ENCODE measurements at regions of chr6 and their contacts with region 1.

Region 1: DNA sequence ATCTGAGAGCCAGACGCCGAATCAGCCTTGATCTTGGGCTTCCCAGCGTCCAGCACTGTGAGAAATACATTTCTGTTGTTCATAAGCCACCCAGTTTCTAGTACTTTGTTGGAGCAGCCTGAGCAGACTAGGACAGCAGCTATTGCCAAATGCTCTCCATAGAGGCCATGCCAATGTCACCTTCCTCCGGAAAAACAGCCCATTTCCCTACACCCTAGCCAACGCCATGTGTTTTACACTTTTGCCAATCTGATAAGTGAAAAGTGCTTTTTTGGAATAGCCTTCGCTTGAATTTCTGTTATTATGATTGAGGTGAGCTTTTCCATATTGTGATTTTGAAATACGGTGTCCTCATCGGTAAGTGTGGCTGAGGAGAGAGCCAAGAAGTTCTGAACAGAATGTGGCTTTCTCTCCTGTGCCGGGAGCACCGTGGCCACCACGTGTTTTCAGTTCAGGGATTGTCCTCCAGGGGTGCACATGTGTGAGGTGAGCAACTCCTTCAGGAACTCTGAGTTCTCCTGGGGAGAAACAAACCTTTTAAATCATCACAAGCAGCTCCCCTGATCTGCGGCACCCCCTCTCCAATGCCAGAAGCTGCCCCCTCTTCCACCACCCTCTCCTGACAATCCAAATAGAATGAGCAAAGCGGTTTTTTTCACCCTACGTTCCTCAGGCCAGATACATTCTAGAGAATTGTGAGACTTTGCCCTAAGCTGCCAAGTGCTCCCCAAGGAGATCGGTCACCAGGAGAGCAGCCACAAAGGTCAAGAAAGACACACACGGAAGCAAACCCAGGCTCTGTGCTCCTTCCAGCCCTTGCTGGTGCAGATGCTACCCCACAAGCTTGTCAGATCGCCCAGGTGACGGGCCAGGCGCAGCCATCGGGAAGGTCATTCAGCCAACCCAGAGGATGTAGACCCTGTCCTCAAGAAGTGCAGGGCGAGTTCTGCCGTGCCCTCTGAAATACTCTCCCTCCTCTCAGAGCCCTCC is 36.0 kb downstream of the TAF8 start:
- DNase-seq: no peak
- H3K4me3 Mint-ChIP-seq: no peak overlapping the region
- H3K27ac Mint-ChIP-seq: no peak overlapping the region
- H3K4me1 Mint-ChIP-seq: peaks cover 14% of the 10 kb centered on the region
- H3K27me3 Mint-ChIP-seq: no peaks in the 10 kb centered on the region
- CTCF ChIP-seq: no peak

Region 2: DNA sequence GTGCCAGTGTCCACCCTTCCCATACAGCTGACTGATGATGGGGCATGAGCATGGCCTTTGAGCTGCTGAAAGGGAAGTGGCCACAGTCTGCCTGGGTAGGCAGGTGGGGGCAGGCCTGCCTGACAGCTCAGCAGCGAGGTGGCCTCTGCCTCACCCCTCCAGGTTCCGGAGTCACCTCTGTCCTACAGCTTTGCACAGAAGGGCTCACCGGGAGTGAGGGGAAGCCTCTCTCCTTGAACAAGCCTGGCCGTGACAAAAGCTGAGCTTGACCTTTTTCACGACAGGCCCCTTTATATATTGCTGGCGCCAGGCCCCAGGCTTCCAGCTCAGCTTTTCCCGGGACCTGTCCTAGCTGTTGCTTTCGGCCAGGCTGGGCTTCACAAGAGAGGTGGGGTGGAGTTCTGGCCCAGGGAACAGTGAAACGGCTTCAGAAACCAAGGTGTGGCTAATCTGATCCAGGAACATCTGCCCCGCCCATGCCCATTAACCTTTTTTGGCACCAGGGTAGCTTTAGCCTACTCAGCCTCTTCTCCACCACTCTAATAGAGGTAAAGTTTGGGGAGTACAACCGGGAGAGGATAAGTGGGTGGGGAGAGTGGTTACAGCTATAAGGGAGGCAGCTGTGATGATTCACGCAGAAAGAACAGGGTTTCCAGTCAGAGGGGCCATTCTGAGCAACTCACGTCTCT is 13.1 kb after region 1 on chr6:
- CTCF ChIA-PET with region 1: interaction called, 26 read pairs
- POLR2A ChIA-PET with region 1: interaction called, 3 read pairs
- intact Hi-C with region 1: no loop called
- DNase-seq: peak; percentile 97
- H3K4me3 Mint-ChIP-seq: peak overlapping the region; percentile 15
- H3K27ac Mint-ChIP-seq: peak overlapping the region; percentile 46
- H3K4me1 Mint-ChIP-seq: peaks cover 30% of the 10 kb centered on the region
- H3K27me3 Mint-ChIP-seq: no peaks in the 10 kb centered on the region
- CTCF ChIP-seq: no peak

Region 3: DNA sequence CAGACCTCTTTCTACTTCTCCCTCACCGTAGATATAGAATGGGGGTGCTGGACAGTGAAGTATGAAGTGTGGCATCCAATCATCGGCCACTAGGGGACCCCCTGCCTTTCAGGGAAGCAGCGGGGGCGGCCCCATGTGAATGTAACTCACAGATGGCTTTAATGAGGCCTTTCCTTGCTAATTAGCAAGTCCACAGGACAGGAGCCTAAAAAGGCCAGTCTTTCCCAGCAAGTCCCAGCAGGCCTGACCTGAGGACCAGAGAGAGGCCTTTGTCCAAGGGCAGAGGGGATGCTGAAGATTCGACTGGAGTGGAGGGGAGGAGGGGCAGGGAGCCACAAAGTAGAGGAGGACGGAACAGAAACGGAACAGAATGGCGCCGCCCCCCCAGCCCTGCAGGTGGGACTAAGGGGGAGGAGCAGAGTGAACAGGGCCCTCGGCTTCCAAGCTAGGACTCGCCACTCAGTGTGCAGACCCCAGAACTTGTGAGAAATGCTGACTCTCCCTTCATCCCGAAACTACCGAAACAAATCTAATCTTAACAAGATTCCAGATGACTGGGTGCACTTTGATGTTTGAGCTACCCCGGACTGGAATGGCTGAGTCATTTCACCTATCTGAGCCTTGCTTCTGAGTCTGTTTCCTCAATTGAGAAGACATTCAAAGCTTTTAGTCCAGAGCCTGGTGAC is 50.3 kb after region 1 on chr6:
- CTCF ChIA-PET with region 1: no interaction called
- POLR2A ChIA-PET with region 1: interaction called, 3 read pairs
- intact Hi-C with region 1: loop called (anchors 1 kb)
- DNase-seq: peak; percentile 53
- H3K4me3 Mint-ChIP-seq: no peak overlapping the region
- H3K27ac Mint-ChIP-seq: peak overlapping the region; percentile 88
- H3K4me1 Mint-ChIP-seq: peaks cover 32% of the 10 kb centered on the region
- H3K27me3 Mint-ChIP-seq: no peaks in the 10 kb centered on the region
- CTCF ChIP-seq: no peak